ENCODE measurements at regions of chr4 and their contacts with region 1.

Region 1: GRCh38 chr4:39365830-39366771 is at the start of gene RFC1:
- DNase-seq: peak; percentile 89 to 94 (median 90)
- H3K4me3 ChIP-seq: peak within 1 kb of the TSS; percentile 85
- H3K4me3 Mint-ChIP-seq: peak within 1 kb of the TSS; percentile 90 to 96 (median 93)
- H3K27ac ChIP-seq: peak within 1 kb of the TSS; percentile 83
- H3K27ac Mint-ChIP-seq: peak within 1 kb of the TSS; percentile 90 to 97 (median 94)
- H3K4me1 ChIP-seq: peaks cover 38% of the 10 kb centered on the region
- H3K4me1 Mint-ChIP-seq: peaks cover 22 to 44% (median 29%) of the 10 kb centered on the region in 4 donors
- H3K27me3 ChIP-seq: no peaks in the 10 kb centered on the region
- H3K27me3 Mint-ChIP-seq: no peaks in the 10 kb centered on the region
- total RNA-seq, gene RFC1: 62.5 to 70.6 TPM

Region 2: GRCh38 chr4:39279416-39279815 is 86.7 kb before region 1 on chr4:
- CTCF ChIA-PET with region 1: no interaction called
- POLR2A ChIA-PET with region 1: no interaction called
- intact Hi-C with region 1: no loop called
- DNase-seq: no peak
- H3K4me3 ChIP-seq: no peak overlapping the region
- H3K4me3 Mint-ChIP-seq: no peak overlapping the region
- H3K27ac ChIP-seq: no peak overlapping the region
- H3K27ac Mint-ChIP-seq: no peak overlapping the region
- H3K4me1 ChIP-seq: no peaks in the 10 kb centered on the region
- H3K4me1 Mint-ChIP-seq: no peaks in the 10 kb centered on the region
- H3K27me3 ChIP-seq: no peaks in the 10 kb centered on the region
- H3K27me3 Mint-ChIP-seq: no peaks in the 10 kb centered on the region

Region 3: DNA sequence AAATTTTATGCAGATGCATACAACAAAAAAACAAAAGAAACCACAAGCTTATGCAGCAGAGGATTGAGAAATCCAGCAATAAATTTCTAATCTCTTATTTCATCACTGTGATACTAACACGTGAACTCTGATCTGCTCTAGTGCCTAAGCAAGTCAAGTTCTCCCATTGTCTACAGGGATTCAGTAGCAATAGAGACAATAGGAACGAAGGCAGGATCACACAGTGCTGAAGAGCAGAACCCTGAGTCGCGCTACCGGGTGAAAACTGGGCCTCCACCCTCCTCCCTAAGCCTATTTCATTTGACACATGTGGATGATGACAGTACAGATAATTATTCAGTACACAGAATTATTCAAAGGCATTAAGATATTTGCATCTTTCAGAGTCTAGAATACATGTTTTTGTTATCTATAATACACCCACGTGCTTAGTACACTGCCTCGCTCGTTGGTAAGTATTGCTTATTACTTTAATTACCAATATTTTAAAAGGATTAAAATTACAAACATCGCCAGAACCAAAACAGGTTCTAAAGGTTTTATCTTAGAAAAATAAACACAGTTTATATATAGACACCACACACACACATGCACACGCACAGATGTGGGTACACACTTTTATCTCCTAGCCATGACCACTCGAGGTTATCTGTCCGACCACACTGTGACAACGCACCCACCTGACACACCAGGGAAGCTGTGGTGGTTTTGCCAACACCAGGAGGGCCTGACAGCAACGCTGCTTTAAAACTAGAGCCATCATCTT is 60.0 kb before region 1 on chr4:
- CTCF ChIA-PET with region 1: no interaction called
- POLR2A ChIA-PET with region 1: no interaction called
- intact Hi-C with region 1: loop called (anchors 2 kb)
- DNase-seq: no peak
- H3K4me3 ChIP-seq: no peak overlapping the region
- H3K4me3 Mint-ChIP-seq: no peak overlapping the region
- H3K27ac ChIP-seq: no peak overlapping the region
- H3K27ac Mint-ChIP-seq: peak overlapping the region in 2 of 7 donors; percentile 5 to 63
- H3K4me1 ChIP-seq: no peaks in the 10 kb centered on the region
- H3K4me1 Mint-ChIP-seq: peaks cover 0 to 3% (median 0%) of the 10 kb centered on the region in 4 donors
- H3K27me3 ChIP-seq: no peaks in the 10 kb centered on the region
- H3K27me3 Mint-ChIP-seq: no peaks in the 10 kb centered on the region

Region 4: GRCh38 chr4:39353478-39354253 is 12.4 kb before region 1 on chr4:
- CTCF ChIA-PET with region 1: interaction called, 7 read pairs
- POLR2A ChIA-PET with region 1: interaction called, 52 read pairs
- intact Hi-C with region 1: loop called (anchors 1 kb)
- DNase-seq: peak; percentile 46 to 70 (median 63)
- H3K4me3 ChIP-seq: peak overlapping the region; percentile 3 to 61
- H3K4me3 Mint-ChIP-seq: peak overlapping the region; percentile 79 to 92 (median 84)
- H3K27ac ChIP-seq: peak overlapping the region; percentile 73
- H3K27ac Mint-ChIP-seq: peak overlapping the region; percentile 91 to 98 (median 94)
- H3K4me1 ChIP-seq: peaks cover 58% of the 10 kb centered on the region
- H3K4me1 Mint-ChIP-seq: peaks cover 39 to 77% (median 53%) of the 10 kb centered on the region in 4 donors
- H3K27me3 ChIP-seq: no peaks in the 10 kb centered on the region
- H3K27me3 Mint-ChIP-seq: no peaks in the 10 kb centered on the region

Measured in CD4-positive, alpha-beta memory T cell (primary cell).